Right cardiac atrium (tissue), 5 donors: ENCODE measurements at regions of chr9 and their contacts with region 1.

Region 1: GRCh38 chr9:70043689-70044489 is at the start of gene MAMDC2:
- DNase-seq: peak; percentile 59 to 89 (median 85)
- ATAC-seq: peak; percentile 81 to 82
- H3K4me3 ChIP-seq: peak within 1 kb of the TSS; percentile 62
- H3K27ac ChIP-seq: peak within 1 kb of the TSS; percentile 15
- H3K4me1 ChIP-seq: peaks cover 2% of the 10 kb centered on the region
- H3K27me3 ChIP-seq: no peaks in the 10 kb centered on the region
- total RNA-seq, gene MAMDC2: 12.2 to 18.1 (median 16.5) TPM

Region 2: GRCh38 chr9:69971643-69972449 is 72.0 kb before region 1 on chr9:
- intact Hi-C with region 1: loop called in 1 of 4 experiments (anchors 10 kb)
- DNase-seq: peak; percentile 75 to 92 (median 86)
- ATAC-seq: peak; percentile 78 to 84
- H3K4me3 ChIP-seq: no peak overlapping the region
- H3K27ac ChIP-seq: no peak overlapping the region
- H3K4me1 ChIP-seq: no peaks in the 10 kb centered on the region
- H3K27me3 ChIP-seq: no peaks in the 10 kb centered on the region

Region 3: GRCh38 chr9:69996967-69997366 is 46.9 kb before region 1 on chr9:
- intact Hi-C with region 1: loop called in 1 of 4 experiments (anchors 10 kb)
- DNase-seq: no peak
- ATAC-seq: peak; percentile 82 to 94
- H3K4me3 ChIP-seq: no peak overlapping the region
- H3K27ac ChIP-seq: no peak overlapping the region
- H3K4me1 ChIP-seq: peaks cover 3% of the 10 kb centered on the region
- H3K27me3 ChIP-seq: no peaks in the 10 kb centered on the region

Region 4: GRCh38 chr9:70100362-70100761 is 56.5 kb after region 1 on chr9:
- intact Hi-C with region 1: loop called in 1 of 4 experiments (anchors 10 kb)
- DNase-seq: peak in 1 of 3 donors; percentile 46
- ATAC-seq: peak; percentile 83 to 85
- H3K4me3 ChIP-seq: no peak overlapping the region
- H3K27ac ChIP-seq: no peak overlapping the region
- H3K4me1 ChIP-seq: no peaks in the 10 kb centered on the region
- H3K27me3 ChIP-seq: no peaks in the 10 kb centered on the region